Activated CD4-positive, alpha-beta T cell treated with anti-CD3 and anti-CD28 coated beads, Interleukin-2, amount 10 ng/mL, durations not matched to agents 24 days and 14 days (primary cell): ENCODE measurements at regions of chr15 and their contacts with region 1.

Region 1: DNA sequence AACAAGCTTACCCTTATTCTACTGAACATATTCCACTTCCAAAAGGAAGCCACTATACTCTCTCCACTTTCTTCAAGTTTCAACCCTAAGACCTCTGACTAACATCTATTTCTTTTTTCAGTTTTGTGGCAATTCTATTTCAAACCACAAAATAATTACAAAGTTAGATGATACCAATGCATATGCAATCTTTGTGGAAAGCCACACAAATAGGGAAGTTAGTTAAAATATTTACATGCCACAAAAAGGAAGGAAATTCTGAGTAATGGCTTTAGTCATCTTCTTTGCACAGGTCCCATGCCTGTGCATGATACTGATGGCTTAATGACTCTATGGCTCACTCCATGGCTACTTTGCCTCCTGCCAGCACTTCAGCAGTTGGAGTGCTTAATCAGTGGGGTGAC is 57.0 kb upstream of the MCTP2 start:
- DNase-seq: peak; percentile 66
- H3K4me3 Mint-ChIP-seq: peak overlapping the region; percentile 28
- H3K27ac Mint-ChIP-seq: peak overlapping the region; percentile 8
- H3K4me1 Mint-ChIP-seq: peaks cover 39% of the 10 kb centered on the region
- H3K27me3 Mint-ChIP-seq: no peaks in the 10 kb centered on the region

Region 2: GRCh38 chr15:94206463-94207167 is 32.2 kb after region 1 on chr15:
- intact Hi-C with region 1: loop called (anchors 1 kb)
- DNase-seq: peak; percentile 89
- H3K4me3 Mint-ChIP-seq: peak overlapping the region; percentile 80
- H3K27ac Mint-ChIP-seq: peak overlapping the region; percentile 96
- H3K4me1 Mint-ChIP-seq: peaks cover 27% of the 10 kb centered on the region
- H3K27me3 Mint-ChIP-seq: peaks cover 7% of the 10 kb centered on the region